Posterior cingulate gyrus (tissue), 11 donors: ENCODE measurements at regions of chr12 and their contacts with region 1.

Region 1: DNA sequence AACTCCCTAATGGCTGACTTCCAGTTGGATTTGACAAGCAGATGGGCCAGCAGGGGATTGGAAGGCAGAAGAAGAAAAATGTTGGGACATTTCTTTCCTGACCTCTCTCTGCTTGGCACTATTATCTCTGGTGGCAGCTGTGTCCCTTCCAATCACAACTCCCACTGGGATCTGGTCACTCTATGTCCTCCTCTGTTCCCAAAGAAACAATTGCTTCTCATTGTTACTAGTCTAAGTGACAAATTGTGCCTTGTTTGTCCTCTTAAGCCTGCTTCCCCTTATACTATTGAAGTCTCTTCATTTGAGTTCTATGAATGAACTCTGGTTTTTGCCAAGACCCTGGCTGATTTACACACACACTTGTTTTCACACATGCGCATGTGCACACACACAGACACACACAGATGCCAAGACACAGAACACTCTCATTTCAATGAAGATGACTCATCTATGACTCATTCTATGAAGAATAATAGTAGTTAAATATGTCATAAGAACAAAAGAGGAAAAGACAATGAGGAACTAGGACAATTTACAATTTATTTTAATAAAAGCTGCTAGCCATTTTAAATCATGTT is 83.0 kb upstream of the FAR2 start:
- DNase-seq: peak in 9 of 10 donors; percentile 40 to 95 (median 67)

Region 2: GRCh38 chr12:28872654-28873268 is 193.3 kb before region 1 on chr12:
- intact Hi-C with region 1: loop called (anchors 10 kb)
- DNase-seq: peak in 6 of 10 donors; percentile 8 to 63 (median 32)

Region 3: DNA sequence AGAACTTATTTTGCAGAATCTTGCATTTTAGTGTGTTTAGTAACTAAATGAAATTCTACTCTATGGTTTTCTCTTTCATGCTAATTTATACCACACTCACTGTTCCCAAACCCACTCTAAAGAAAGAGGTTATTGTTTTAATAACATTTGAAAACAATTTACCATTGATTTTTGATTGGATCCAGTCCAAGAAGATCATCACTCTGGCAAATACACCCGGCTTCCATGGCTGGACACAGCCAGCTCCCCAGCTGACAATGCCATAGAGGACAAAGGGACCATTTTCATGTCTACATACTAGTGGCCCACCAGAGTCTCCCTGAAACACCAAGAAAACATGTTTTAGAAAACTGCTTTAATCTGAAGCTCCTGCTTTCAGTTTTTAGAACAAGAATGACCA is 389.0 kb after region 1 on chr12:
- intact Hi-C with region 1: loop called (anchors 10 kb)
- DNase-seq: peak in 8 of 10 donors; percentile 23 to 91 (median 58)